GM12878 (cell line): ENCODE measurements at regions of chr10 and their contacts with region 1.

Region 1: GRCh38 chr10:79374312-79375191 is 27.3 kb downstream of the PPIF start:
- DNase-seq: no peak
- ATAC-seq: peak; percentile 95
- H3K4me3 ChIP-seq: no peak overlapping the region
- H3K27ac ChIP-seq: no peak overlapping the region
- H3K4me1 ChIP-seq: no peaks in the 10 kb centered on the region
- H3K27me3 ChIP-seq: no peaks in the 10 kb centered on the region; a peak in 2 of 4 replicates
- CTCF ChIP-seq: peak; percentile 94 to 98 (median 98)
- EP300 ChIP-seq: no peak
- POLR2A ChIP-seq: no peak
- RAD21 ChIP-seq: peak; percentile 97

Region 2: GRCh38 chr10:78578929-78579328 is 795.6 kb before region 1 on chr10:
- CTCF ChIA-PET with region 1: no interaction called
- POLR2A ChIA-PET with region 1: no interaction called
- RAD21 ChIA-PET with region 1: no interaction called
- SMC1A ChIA-PET with region 1: no interaction called
- in situ Hi-C with region 1: no loop called
- intact Hi-C with region 1: no loop called
- DNase-seq: peak; percentile 21
- ATAC-seq: peak; percentile 63
- H3K4me3 ChIP-seq: no peak overlapping the region
- H3K27ac ChIP-seq: no peak overlapping the region
- H3K4me1 ChIP-seq: no peaks in the 10 kb centered on the region
- H3K27me3 ChIP-seq: no peaks in the 10 kb centered on the region; a peak in 1 of 4 replicates
- CTCF ChIP-seq: no peak
- EP300 ChIP-seq: peak in 1 of 2 experiments; percentile 46; a peak in 1 of 4 replicates
- POLR2A ChIP-seq: no peak
- RAD21 ChIP-seq: no peak

Region 3: DNA sequence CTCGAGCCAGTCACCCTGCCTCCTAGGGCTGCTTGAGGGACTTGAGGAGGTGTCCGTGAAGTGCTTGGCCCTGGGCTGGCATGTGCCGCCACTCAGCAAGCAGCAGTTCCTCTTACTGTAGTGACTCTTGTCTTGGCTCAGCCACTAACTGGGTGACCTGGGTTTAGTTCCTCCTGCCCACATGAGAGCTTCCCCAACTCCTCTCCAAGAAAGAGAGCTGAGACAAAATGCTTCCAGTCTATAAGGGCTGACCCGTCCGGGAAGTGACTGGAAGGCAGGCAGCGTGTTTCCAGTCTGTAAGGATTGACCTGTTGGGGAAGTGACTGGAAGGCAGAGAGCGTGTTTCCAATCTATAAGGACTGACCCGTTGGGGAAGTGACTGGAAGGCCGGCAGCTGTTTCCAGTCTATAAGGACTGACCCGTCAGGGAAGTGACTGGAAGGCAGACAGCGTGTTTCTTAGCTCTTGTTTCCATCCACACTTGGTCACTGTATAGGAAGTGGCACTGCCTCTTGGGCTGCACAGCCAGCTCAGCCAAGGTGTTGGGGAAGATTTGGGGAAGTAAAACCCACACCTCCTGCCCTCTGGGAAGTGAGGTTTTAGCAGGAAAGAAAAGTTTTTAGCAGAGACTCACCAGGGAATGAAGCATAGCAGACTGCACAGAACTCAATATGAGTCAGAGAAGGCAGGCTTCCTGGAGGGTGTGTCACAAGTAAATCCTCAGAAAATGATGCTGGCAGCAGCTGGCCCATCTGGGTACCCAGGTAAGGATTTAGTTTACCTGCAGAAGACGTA is 80.5 kb before region 1 on chr10:
- CTCF ChIA-PET with region 1: interaction called, 10 read pairs
- POLR2A ChIA-PET with region 1: no interaction called
- RAD21 ChIA-PET with region 1: interaction called, 5 read pairs
- SMC1A ChIA-PET with region 1: interaction called, 5 read pairs
- in situ Hi-C with region 1: no loop called
- intact Hi-C with region 1: no loop called
- DNase-seq: no peak
- ATAC-seq: peak; percentile 34; the same call in 2 of the 3 replicates
- H3K4me3 ChIP-seq: no peak overlapping the region
- H3K27ac ChIP-seq: no peak overlapping the region
- H3K4me1 ChIP-seq: peaks cover 12% of the 10 kb centered on the region
- H3K27me3 ChIP-seq: no peaks in the 10 kb centered on the region
- CTCF ChIP-seq: no peak
- EP300 ChIP-seq: no peak
- POLR2A ChIP-seq: no peak
- RAD21 ChIP-seq: no peak

Region 4: DNA sequence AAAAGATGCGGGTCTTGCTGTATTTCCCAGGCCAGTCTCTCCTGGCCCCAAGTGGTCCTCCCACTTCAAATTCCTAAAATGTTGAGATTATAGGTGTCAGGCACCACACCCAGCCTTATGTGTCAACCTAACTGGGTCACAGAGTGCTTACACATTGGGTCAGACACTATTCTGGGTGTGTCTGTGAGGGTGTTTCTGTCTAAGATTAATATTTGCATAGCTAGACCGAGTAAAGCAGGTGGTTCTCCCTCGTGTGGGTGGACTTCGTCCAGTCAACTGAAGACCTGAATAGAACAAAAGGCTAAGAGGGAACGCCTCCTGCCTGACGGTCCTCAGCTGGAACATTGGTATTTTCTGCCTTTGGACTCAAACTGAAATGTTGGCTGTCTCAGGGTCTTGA is 15.8 kb before region 1 on chr10:
- CTCF ChIA-PET with region 1: interaction called, 30 read pairs
- POLR2A ChIA-PET with region 1: no interaction called
- RAD21 ChIA-PET with region 1: interaction called, 3 read pairs
- SMC1A ChIA-PET with region 1: interaction called, 5 read pairs
- in situ Hi-C with region 1: no loop called
- intact Hi-C with region 1: no loop called
- DNase-seq: no peak
- ATAC-seq: peak; percentile 56
- H3K4me3 ChIP-seq: no peak overlapping the region
- H3K27ac ChIP-seq: no peak overlapping the region
- H3K4me1 ChIP-seq: peaks cover 16% of the 10 kb centered on the region
- H3K27me3 ChIP-seq: no peaks in the 10 kb centered on the region
- CTCF ChIP-seq: no peak
- EP300 ChIP-seq: no peak
- POLR2A ChIP-seq: no peak
- RAD21 ChIP-seq: no peak

Region 5: DNA sequence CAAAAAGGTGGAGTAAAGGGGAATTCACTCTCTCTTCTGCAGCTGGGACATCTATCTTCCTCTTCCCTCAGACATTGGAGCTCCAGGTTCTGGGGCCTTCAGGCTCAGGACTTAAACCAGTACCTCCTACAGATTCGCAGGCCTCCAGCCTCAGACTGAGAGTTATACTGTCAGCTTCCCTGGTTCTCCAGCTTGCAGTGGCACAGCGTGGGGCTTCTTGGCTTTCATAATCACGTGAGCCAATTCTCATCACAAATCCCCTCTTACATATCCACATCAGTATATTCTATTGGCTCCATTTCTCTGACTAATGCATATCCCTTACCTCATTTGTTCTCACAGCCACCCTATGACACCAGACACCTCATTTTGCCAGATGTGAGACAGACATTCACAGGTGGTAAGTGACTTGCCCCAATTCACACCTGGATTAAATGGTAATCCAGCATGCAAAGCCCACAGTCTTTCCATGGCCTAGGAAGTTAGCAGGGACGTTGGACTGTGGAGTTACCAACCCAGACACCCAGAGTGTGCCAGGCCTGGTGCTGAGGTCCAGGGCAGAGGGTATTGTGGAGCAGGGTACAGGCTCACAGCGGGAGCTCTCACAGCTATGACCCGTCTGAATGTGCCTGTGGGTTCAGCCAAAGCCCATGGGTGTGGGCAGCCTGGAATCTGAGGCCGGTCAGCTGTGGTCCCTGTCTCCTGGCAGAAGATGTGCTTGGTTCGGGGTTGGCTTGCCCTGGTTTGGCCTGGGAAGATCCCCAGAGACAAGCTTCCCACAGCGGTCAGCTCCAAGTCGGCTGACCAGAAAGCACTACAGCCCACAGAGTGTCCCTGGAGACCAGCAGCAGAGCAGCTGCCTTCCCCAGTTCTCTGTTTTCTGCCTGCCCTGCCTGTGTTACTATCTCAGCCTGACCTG is 89.3 kb after region 1 on chr10:
- CTCF ChIA-PET with region 1: interaction called, 44 read pairs
- POLR2A ChIA-PET with region 1: no interaction called
- RAD21 ChIA-PET with region 1: interaction called, 25 read pairs
- SMC1A ChIA-PET with region 1: interaction called, 28 read pairs
- in situ Hi-C with region 1: loop called (anchors 5 kb)
- intact Hi-C with region 1: loop called (anchors 1 kb)
- DNase-seq: no peak
- ATAC-seq: peak; percentile 31; the same call in 1 of the 3 replicates
- H3K4me3 ChIP-seq: no peak overlapping the region
- H3K27ac ChIP-seq: no peak overlapping the region
- H3K4me1 ChIP-seq: no peaks in the 10 kb centered on the region
- H3K27me3 ChIP-seq: peaks cover 0 to 3% of the 10 kb centered on the region in 2 experiments; a peak in 2 of 4 replicates
- CTCF ChIP-seq: no peak
- EP300 ChIP-seq: no peak
- POLR2A ChIP-seq: no peak
- RAD21 ChIP-seq: no peak

Region 6: DNA sequence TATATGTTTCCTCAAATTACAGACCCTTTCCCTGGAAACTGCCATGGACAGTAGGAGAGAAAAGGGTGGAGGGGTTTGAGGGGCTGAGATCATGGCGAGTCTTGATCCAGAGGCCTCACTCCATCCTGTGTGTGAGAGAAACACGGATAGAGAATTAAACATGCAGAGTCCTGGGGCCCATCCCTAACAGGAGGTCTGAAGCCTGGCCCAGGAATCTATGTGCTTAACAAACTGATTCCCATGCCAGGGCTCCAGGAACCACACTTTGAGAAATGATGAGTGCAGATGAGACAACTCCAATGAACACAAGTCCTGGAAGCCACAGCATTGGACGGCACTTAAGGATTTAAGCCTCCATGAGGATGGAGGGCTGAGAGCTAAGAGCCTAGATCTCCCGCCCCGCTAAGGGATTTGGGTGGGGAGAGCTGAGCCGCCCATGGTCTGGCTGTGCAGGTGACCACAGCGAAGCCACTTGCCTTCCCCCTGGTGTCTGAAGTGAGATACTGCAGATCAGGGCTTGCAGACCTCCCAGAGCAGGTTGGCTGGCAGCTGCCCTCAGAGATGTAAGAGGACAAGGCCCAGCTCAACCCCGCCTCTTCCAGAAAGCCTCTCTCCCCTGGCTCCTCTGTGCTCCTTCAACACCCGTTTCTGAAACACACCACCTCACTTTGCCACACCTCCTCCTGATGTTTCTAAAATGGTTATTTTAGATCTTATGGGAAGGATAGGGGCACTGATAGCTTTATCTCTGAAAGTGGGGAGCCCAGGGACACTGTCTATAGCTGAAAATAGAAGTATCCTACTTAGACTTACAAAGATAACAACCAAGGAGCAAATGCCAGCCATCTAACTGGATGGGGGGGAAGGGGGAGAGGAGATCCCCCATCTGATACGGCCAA is 113.0 kb after region 1 on chr10:
- CTCF ChIA-PET with region 1: interaction called, 100 read pairs
- POLR2A ChIA-PET with region 1: no interaction called
- RAD21 ChIA-PET with region 1: interaction called, 11 read pairs
- SMC1A ChIA-PET with region 1: interaction called, 36 read pairs
- in situ Hi-C with region 1: no loop called
- intact Hi-C with region 1: loop called (anchors 1 kb)
- DNase-seq: no peak
- ATAC-seq: peak; percentile 95
- H3K4me3 ChIP-seq: no peak overlapping the region
- H3K27ac ChIP-seq: no peak overlapping the region
- H3K4me1 ChIP-seq: peaks cover 6% of the 10 kb centered on the region
- H3K27me3 ChIP-seq: no peaks in the 10 kb centered on the region; a peak in 1 of 4 replicates
- CTCF ChIP-seq: peak; percentile 72 to 83 (median 78)
- EP300 ChIP-seq: no peak
- POLR2A ChIP-seq: no peak
- RAD21 ChIP-seq: peak; percentile 66